ENCODE measurements at regions of chr11 and their contacts with region 1.

Region 1: GRCh38 chr11:89613911-89614310 is 96.2 kb upstream of the TRIM77 start:
- DNase-seq: no peak
- H3K4me3 ChIP-seq: no peak overlapping the region
- H3K4me3 Mint-ChIP-seq: no peak overlapping the region
- H3K27ac Mint-ChIP-seq: no peak overlapping the region
- H3K4me1 ChIP-seq: no peaks in the 10 kb centered on the region
- H3K4me1 Mint-ChIP-seq: no peaks in the 10 kb centered on the region
- H3K27me3 ChIP-seq: no peaks in the 10 kb centered on the region
- H3K27me3 Mint-ChIP-seq: no peaks in the 10 kb centered on the region
- CTCF ChIP-seq: no peak

Region 2: DNA sequence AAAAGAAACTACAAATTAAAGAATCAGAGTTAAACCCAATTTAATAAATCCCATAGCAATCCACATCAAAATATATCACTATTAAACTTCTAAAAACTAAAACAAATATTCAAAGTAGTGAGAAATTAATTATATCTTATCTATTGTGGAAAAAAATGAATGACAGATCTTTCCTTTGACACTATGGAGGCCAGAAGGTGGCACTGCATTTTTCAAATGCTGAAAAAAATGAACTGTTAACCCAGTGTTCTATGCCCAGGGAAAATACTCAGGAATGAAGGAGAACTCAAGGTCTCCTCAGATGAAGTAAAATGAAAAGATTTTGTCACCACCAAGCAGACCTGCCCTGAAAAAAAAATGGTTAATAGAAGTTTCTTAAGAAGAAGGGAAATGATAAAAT is 408.5 kb before region 1 on chr11:
- CTCF ChIA-PET with region 1: no interaction called
- POLR2A ChIA-PET with region 1: no interaction called
- intact Hi-C with region 1: loop called (anchors 1 kb)
- DNase-seq: no peak
- H3K4me3 ChIP-seq: no peak overlapping the region
- H3K4me3 Mint-ChIP-seq: no peak overlapping the region
- H3K27ac Mint-ChIP-seq: no peak overlapping the region
- H3K4me1 ChIP-seq: no peaks in the 10 kb centered on the region
- H3K4me1 Mint-ChIP-seq: no peaks in the 10 kb centered on the region
- H3K27me3 ChIP-seq: no peaks in the 10 kb centered on the region
- H3K27me3 Mint-ChIP-seq: peaks cover 7% of the 10 kb centered on the region
- CTCF ChIP-seq: peak; percentile 21 to 45

Region 3: GRCh38 chr11:89327885-89328284 is 286.0 kb before region 1 on chr11:
- CTCF ChIA-PET with region 1: no interaction called
- POLR2A ChIA-PET with region 1: no interaction called
- intact Hi-C with region 1: loop called (anchors 1 kb)
- DNase-seq: no peak
- H3K4me3 ChIP-seq: no peak overlapping the region
- H3K4me3 Mint-ChIP-seq: no peak overlapping the region
- H3K27ac Mint-ChIP-seq: no peak overlapping the region
- H3K4me1 ChIP-seq: no peaks in the 10 kb centered on the region
- H3K4me1 Mint-ChIP-seq: no peaks in the 10 kb centered on the region
- H3K27me3 ChIP-seq: no peaks in the 10 kb centered on the region
- H3K27me3 Mint-ChIP-seq: peaks cover 3% of the 10 kb centered on the region
- CTCF ChIP-seq: no peak

Region 4: DNA sequence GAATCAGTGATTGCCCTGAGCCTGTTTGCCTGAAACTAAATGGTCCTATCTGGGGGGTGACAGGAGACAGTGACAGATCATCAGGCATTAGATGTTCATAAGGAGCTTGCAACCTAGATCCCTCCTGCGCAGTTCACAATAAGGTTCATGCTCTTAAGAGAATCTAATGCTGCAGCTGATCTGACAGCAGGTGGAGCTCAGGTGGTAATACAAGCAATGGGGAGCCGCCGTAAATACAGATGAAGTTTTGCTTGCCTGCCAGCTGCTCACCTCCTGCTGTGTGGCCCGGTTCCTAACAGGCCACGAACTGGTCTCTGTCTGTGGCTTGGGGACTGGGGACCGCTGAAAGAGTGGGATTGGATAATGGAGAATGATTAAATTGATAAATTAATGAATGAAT is 136.7 kb before region 1 on chr11:
- CTCF ChIA-PET with region 1: interaction called, 16 read pairs
- POLR2A ChIA-PET with region 1: no interaction called
- intact Hi-C with region 1: loop called (anchors 1 kb)
- DNase-seq: peak; percentile 73 to 74
- H3K4me3 ChIP-seq: no peak overlapping the region
- H3K4me3 Mint-ChIP-seq: no peak overlapping the region
- H3K27ac Mint-ChIP-seq: no peak overlapping the region
- H3K4me1 ChIP-seq: no peaks in the 10 kb centered on the region
- H3K4me1 Mint-ChIP-seq: peaks cover 6% of the 10 kb centered on the region
- H3K27me3 ChIP-seq: no peaks in the 10 kb centered on the region
- H3K27me3 Mint-ChIP-seq: peaks cover 3% of the 10 kb centered on the region
- CTCF ChIP-seq: peak; percentile 51 to 68

Region 5: GRCh38 chr11:89498856-89499448 is 115.0 kb before region 1 on chr11:
- CTCF ChIA-PET with region 1: interaction called, 8 read pairs
- POLR2A ChIA-PET with region 1: no interaction called
- intact Hi-C with region 1: loop called (anchors 1 kb)
- DNase-seq: peak in 1 of 2 experiments; percentile 39
- H3K4me3 ChIP-seq: no peak overlapping the region
- H3K4me3 Mint-ChIP-seq: no peak overlapping the region
- H3K27ac Mint-ChIP-seq: no peak overlapping the region
- H3K4me1 ChIP-seq: no peaks in the 10 kb centered on the region
- H3K4me1 Mint-ChIP-seq: peaks cover 3% of the 10 kb centered on the region
- H3K27me3 ChIP-seq: no peaks in the 10 kb centered on the region
- H3K27me3 Mint-ChIP-seq: no peaks in the 10 kb centered on the region
- CTCF ChIP-seq: peak; percentile 56 to 86

Region 6: GRCh38 chr11:89544973-89545372 is 68.9 kb before region 1 on chr11:
- CTCF ChIA-PET with region 1: no interaction called
- POLR2A ChIA-PET with region 1: no interaction called
- intact Hi-C with region 1: loop called (anchors 5 kb)
- DNase-seq: no peak
- H3K4me3 ChIP-seq: no peak overlapping the region
- H3K4me3 Mint-ChIP-seq: no peak overlapping the region
- H3K27ac Mint-ChIP-seq: no peak overlapping the region
- H3K4me1 ChIP-seq: peaks cover 8% of the 10 kb centered on the region
- H3K4me1 Mint-ChIP-seq: peaks cover 25% of the 10 kb centered on the region
- H3K27me3 ChIP-seq: no peaks in the 10 kb centered on the region
- H3K27me3 Mint-ChIP-seq: no peaks in the 10 kb centered on the region
- CTCF ChIP-seq: no peak

Region 7: DNA sequence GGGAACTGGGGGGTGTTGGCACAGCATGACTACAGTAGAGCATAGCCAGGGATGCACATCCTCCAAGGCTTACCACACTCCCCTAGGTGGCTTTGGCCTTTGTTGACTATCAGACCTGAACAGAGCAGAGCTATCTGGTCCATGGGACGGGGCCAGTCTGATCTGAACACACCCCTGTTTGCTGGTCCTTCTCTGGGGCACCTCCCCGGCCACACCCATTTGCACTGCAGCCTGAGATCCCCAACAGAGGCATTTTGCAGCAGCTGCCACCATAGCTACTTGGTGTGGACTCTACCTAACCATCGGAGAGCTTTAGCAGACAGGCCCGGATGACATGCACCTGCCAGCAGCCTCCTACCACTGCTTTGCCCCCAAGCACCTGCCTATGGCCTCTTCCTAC is 46.9 kb before region 1 on chr11:
- CTCF ChIA-PET with region 1: no interaction called
- POLR2A ChIA-PET with region 1: no interaction called
- intact Hi-C with region 1: no loop called
- DNase-seq: no peak
- H3K4me3 ChIP-seq: no peak overlapping the region
- H3K4me3 Mint-ChIP-seq: no peak overlapping the region
- H3K27ac Mint-ChIP-seq: no peak overlapping the region
- H3K4me1 ChIP-seq: no peaks in the 10 kb centered on the region
- H3K4me1 Mint-ChIP-seq: no peaks in the 10 kb centered on the region
- H3K27me3 ChIP-seq: no peaks in the 10 kb centered on the region
- H3K27me3 Mint-ChIP-seq: no peaks in the 10 kb centered on the region
- CTCF ChIP-seq: no peak

Region 8: DNA sequence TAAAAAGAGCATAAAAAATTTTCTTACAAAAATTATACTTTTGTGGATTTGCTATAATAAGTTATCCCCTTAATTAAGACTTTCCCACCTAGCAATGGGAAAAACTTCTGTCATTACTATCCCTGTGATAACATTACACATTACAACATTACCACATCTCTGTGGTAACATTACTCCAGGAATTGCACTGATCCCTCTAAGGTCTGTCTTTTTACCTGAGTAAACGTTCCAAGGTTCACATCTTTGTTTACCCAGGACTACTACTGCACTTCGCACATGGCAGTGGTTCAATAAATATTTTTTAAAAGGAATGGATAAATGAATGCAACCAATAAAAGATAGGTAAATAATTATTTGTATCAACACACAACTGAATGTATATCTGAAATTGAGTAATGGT is 30.3 kb before region 1 on chr11:
- CTCF ChIA-PET with region 1: no interaction called
- POLR2A ChIA-PET with region 1: no interaction called
- intact Hi-C with region 1: no loop called
- DNase-seq: peak in 1 of 2 experiments; percentile 38
- H3K4me3 ChIP-seq: no peak overlapping the region
- H3K4me3 Mint-ChIP-seq: no peak overlapping the region
- H3K27ac Mint-ChIP-seq: no peak overlapping the region
- H3K4me1 ChIP-seq: peaks cover 7% of the 10 kb centered on the region; the same call in 1 of the 2 replicates
- H3K4me1 Mint-ChIP-seq: peaks cover 20% of the 10 kb centered on the region
- H3K27me3 ChIP-seq: no peaks in the 10 kb centered on the region
- H3K27me3 Mint-ChIP-seq: no peaks in the 10 kb centered on the region
- CTCF ChIP-seq: no peak

Region 9: GRCh38 chr11:89736566-89736965 is 122.7 kb after region 1 on chr11:
- CTCF ChIA-PET with region 1: no interaction called
- POLR2A ChIA-PET with region 1: no interaction called
- intact Hi-C with region 1: no loop called
- DNase-seq: no peak
- H3K4me3 ChIP-seq: no peak overlapping the region
- H3K4me3 Mint-ChIP-seq: no peak overlapping the region
- H3K27ac Mint-ChIP-seq: no peak overlapping the region
- H3K4me1 ChIP-seq: no peaks in the 10 kb centered on the region
- H3K4me1 Mint-ChIP-seq: no peaks in the 10 kb centered on the region
- H3K27me3 ChIP-seq: no peaks in the 10 kb centered on the region
- H3K27me3 Mint-ChIP-seq: peaks cover 4% of the 10 kb centered on the region
- CTCF ChIP-seq: no peak

Region 10: DNA sequence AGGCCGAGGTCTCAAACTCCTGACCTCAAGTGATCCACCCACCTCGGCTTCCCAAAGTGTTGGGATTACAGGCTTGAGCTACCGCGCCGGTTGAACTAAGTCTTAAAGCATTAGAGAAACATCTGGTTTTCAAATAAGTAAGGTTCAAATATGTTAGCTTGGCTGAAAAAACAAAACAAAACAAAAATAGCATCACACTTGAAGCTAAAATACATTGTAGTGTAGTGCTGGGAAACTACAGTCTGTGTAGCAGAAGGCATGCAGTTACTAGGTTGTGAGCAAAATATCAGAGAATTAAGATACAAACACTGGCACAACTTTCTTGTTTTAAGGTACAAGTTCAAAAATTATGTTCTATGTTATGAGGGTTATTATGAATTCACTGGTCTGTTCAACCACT is 833.7 kb after region 1 on chr11:
- CTCF ChIA-PET with region 1: no interaction called
- POLR2A ChIA-PET with region 1: no interaction called
- intact Hi-C with region 1: no loop called
- DNase-seq: no peak
- H3K4me3 ChIP-seq: no peak overlapping the region
- H3K4me3 Mint-ChIP-seq: no peak overlapping the region
- H3K27ac Mint-ChIP-seq: peak overlapping the region; percentile 64
- H3K4me1 ChIP-seq: peaks cover 52% of the 10 kb centered on the region
- H3K4me1 Mint-ChIP-seq: peaks cover 47% of the 10 kb centered on the region
- H3K27me3 ChIP-seq: no peaks in the 10 kb centered on the region
- H3K27me3 Mint-ChIP-seq: no peaks in the 10 kb centered on the region
- CTCF ChIP-seq: no peak